MCF 10A (cell line): ENCODE measurements at regions of chr17 and their contacts with region 1.

Region 1: DNA sequence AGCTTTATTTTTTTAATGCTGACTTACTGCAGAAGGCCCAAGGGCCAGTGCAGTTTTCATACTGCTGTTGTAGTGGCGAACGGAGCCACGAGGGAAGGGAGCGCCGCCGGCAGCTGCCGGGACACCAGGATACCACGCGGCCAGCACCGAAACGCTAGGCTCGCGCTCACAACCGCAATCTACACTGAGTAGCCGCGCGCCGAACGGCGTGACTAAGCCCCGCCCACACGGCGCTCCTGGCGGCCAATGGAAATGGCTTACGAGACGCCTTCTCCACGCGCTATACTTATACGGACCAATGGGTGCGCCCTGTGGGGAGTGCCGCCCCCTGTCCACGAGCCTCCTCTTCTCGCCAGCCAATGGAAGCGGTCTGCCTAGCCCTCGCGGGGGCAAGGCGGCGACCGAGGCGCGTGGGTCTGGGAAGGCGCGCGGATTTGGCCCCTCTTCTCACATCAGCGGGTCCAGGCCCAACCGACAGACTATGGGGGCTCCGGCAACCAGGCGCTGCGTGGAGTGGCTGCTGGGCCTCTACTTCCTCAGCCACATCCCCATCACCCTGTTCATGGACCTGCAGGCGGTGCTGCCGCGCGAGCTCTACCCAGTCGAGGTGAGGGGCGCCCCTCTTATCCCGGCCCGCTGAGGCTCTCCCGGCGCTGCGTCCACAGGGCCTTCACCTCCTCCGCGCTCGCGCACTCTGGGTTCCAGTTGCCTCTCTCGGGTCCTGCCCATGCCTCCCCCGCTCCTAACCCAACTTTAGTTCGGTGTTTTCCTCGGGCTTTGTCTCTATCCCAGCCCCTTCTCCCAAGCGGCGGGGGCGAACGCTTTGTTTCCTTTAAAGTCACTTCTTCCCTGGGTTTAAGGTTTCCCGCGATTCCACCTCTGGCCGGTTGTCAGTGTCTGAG is at the start of gene TMEM97:
- DNase-seq: peak; percentile 98
- H3K4me3 Mint-ChIP-seq: peak within 1 kb of the TSS; percentile 99
- H3K27ac Mint-ChIP-seq: peak within 1 kb of the TSS; percentile 82
- H3K4me1 Mint-ChIP-seq: peaks cover 38% of the 10 kb centered on the region
- H3K27me3 Mint-ChIP-seq: no peaks in the 10 kb centered on the region
- CTCF ChIP-seq: peak; percentile 6
- total RNA-seq, gene TMEM97: 8.6 and 12.1 TPM in 2 replicates

Region 2: GRCh38 chr17:27956601-27957445 is 362.2 kb before region 1 on chr17:
- CTCF ChIA-PET with region 1: no interaction called
- POLR2A ChIA-PET with region 1: no interaction called
- intact Hi-C with region 1: no loop called
- DNase-seq: peak; percentile 4
- H3K4me3 Mint-ChIP-seq: no peak overlapping the region
- H3K27ac Mint-ChIP-seq: no peak overlapping the region
- H3K4me1 Mint-ChIP-seq: no peaks in the 10 kb centered on the region
- H3K27me3 Mint-ChIP-seq: peaks cover 12% of the 10 kb centered on the region
- CTCF ChIP-seq: no peak

Region 3: GRCh38 chr17:28053044-28053670 is 265.9 kb before region 1 on chr17:
- CTCF ChIA-PET with region 1: no interaction called
- POLR2A ChIA-PET with region 1: no interaction called
- intact Hi-C with region 1: no loop called
- DNase-seq: no peak
- H3K4me3 Mint-ChIP-seq: no peak overlapping the region
- H3K27ac Mint-ChIP-seq: no peak overlapping the region
- H3K4me1 Mint-ChIP-seq: peaks cover 16% of the 10 kb centered on the region
- H3K27me3 Mint-ChIP-seq: no peaks in the 10 kb centered on the region
- CTCF ChIP-seq: no peak

Region 4: DNA sequence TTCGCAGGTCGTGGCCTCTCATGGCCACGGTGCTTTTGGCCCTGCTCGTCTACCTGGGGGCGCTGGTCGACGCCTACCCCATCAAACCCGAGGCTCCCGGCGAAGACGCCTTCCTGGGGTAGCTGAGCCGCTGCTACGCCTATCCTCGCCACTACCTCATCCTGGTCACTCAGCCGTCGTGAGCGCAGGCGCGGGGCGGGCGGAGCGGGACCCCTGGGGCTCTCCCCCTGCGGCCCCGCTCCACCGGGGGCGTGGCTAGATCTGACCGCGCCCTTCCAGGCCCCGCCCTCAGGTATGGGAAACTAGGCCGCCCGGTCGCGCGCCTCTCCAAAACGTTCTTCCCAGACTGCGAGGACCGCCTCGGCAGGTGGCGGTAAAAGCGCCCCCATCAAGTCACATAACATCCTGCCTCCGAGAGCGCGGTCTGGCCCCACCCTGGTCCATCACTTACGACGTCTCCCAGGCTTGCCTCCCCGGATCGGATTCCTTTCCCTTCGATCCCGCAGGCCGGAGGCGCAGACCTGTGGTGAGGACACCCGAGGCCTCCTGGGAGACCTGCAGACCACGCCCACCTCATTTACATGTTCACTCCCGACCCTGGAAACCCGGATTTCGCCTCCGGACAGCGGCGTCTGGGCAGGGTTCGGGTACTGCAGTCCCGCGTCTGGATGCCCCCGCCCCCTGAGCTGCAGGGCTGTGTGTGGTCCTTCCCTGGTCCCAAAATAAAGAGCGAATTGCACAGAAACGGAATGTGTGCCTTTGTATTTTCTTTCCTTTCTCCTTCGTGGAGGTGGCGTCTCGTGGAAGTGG is 91.5 kb before region 1 on chr17:
- CTCF ChIA-PET with region 1: interaction called, 85 read pairs
- POLR2A ChIA-PET with region 1: interaction called, 3 read pairs
- intact Hi-C with region 1: no loop called
- DNase-seq: peak; percentile 83
- H3K4me3 Mint-ChIP-seq: peak overlapping the region; percentile 88
- H3K27ac Mint-ChIP-seq: peak overlapping the region; percentile 94
- H3K4me1 Mint-ChIP-seq: peaks cover 5% of the 10 kb centered on the region
- H3K27me3 Mint-ChIP-seq: no peaks in the 10 kb centered on the region
- CTCF ChIP-seq: no peak

Region 5: DNA sequence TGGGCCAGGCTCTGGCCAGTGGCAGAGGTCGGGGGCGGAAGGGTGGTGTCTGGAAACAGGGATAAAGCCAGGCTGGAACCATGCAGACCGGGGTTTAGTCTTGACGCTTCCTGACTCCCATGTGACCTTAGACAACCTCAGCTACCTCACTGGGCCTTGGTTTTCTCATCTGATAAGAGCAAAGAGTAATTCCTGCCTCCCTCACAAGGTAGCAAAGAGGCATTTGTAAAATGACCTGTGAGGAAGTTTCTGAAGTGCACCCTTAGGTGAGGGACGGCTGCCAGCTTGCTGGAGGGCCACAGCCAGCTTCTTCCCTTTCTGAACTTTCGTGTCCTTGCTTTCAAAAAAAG is 78.0 kb before region 1 on chr17:
- CTCF ChIA-PET with region 1: interaction called, 85 read pairs
- POLR2A ChIA-PET with region 1: interaction called, 4 read pairs
- intact Hi-C with region 1: loop called (anchors 5 kb)
- DNase-seq: no peak
- H3K4me3 Mint-ChIP-seq: no peak overlapping the region
- H3K27ac Mint-ChIP-seq: no peak overlapping the region
- H3K4me1 Mint-ChIP-seq: no peaks in the 10 kb centered on the region
- H3K27me3 Mint-ChIP-seq: peaks cover 6% of the 10 kb centered on the region
- CTCF ChIP-seq: no peak

Region 6: DNA sequence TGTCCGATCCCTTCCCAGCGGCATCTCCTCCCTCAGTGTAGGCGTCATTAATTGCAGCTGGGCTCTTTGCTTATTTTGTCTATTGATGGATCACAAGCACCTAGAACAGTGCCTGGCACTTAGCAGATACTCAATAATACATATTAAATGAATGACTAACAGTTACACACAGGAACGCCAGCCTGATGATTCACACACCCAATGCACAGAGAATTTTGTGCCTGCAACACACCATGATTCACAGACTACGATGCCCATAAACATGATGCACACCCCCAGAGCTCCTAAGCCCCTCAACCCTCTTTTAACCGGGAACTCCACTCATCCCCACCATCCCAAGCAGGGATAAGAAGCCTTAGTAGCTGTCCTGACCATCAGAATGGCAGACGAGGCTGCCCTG is 66.6 kb before region 1 on chr17:
- CTCF ChIA-PET with region 1: interaction called, 15 read pairs
- POLR2A ChIA-PET with region 1: no interaction called
- intact Hi-C with region 1: loop called (anchors 5 kb)
- DNase-seq: peak; percentile 53
- H3K4me3 Mint-ChIP-seq: no peak overlapping the region
- H3K27ac Mint-ChIP-seq: no peak overlapping the region
- H3K4me1 Mint-ChIP-seq: peaks cover 15% of the 10 kb centered on the region
- H3K27me3 Mint-ChIP-seq: peaks cover 23% of the 10 kb centered on the region
- CTCF ChIP-seq: no peak

Region 7: GRCh38 chr17:28267720-28268609 is 51.0 kb before region 1 on chr17:
- CTCF ChIA-PET with region 1: interaction called, 6 read pairs
- POLR2A ChIA-PET with region 1: interaction called, 12 read pairs
- intact Hi-C with region 1: no loop called
- DNase-seq: no peak
- H3K4me3 Mint-ChIP-seq: no peak overlapping the region
- H3K27ac Mint-ChIP-seq: no peak overlapping the region
- H3K4me1 Mint-ChIP-seq: no peaks in the 10 kb centered on the region
- H3K27me3 Mint-ChIP-seq: peaks cover 40% of the 10 kb centered on the region
- CTCF ChIP-seq: no peak

Region 8: DNA sequence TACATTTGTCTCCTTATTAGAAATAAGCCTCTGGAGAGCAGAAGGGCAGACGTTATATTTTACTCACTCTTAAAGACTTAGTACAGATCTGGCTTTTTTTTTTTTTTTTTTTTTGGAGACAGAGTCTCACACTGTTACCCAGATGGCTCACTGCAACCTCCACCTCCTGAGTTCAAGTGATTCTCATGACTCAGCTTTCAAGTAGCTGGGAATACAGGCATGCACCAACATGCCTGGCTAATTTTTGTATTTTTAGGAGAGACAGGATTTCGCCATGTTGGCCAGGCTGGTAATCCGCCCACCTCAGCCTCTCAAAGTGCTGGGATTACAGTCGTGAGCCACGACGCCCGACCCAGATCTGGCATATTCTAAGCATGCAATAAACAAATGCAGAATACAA is 36.4 kb before region 1 on chr17:
- CTCF ChIA-PET with region 1: interaction called, 4 read pairs
- POLR2A ChIA-PET with region 1: interaction called, 15 read pairs
- intact Hi-C with region 1: no loop called
- DNase-seq: peak; percentile 92
- H3K4me3 Mint-ChIP-seq: peak overlapping the region; percentile 17
- H3K27ac Mint-ChIP-seq: peak overlapping the region; percentile 90
- H3K4me1 Mint-ChIP-seq: peaks cover 28% of the 10 kb centered on the region
- H3K27me3 Mint-ChIP-seq: no peaks in the 10 kb centered on the region
- CTCF ChIP-seq: no peak

Region 9: DNA sequence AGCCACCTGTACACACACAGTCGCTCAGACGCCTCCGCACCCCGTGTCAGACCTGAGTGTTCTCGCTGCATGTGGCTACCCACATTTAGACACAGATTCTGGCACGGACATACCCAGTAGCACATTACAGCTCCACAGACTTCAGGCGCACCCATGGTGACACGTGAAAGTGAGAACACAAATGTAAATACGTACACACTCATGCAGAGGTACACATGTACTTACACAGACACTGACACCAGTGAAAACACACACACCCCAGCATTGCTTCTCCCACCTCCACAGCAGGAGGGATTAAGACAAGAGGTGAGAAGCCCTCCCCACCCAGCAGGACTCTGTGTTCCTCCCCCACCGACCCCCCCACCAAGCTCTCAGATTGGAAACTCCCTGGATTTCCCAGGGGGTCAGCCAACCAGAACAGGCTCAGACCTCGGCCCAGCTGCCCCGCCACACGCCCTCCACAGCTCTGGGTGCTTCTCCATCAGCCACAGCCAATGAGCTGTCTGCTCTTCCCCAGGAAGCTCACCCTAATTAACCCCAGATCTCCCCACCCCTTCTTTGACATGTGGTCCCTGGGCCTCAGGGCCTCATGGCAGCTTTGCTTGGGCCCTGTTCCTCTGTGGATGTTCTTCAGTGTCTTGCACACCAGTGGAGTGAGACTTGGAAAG is 181.8 kb after region 1 on chr17:
- CTCF ChIA-PET with region 1: no interaction called
- POLR2A ChIA-PET with region 1: no interaction called
- intact Hi-C with region 1: no loop called
- DNase-seq: no peak
- H3K4me3 Mint-ChIP-seq: no peak overlapping the region
- H3K27ac Mint-ChIP-seq: no peak overlapping the region
- H3K4me1 Mint-ChIP-seq: peaks cover 7% of the 10 kb centered on the region
- H3K27me3 Mint-ChIP-seq: peaks cover 12% of the 10 kb centered on the region
- CTCF ChIP-seq: no peak